Breast epithelium (tissue), 4 donors: ENCODE measurements at regions of chr1 and their contacts with region 1.

Region 1: GRCh38 chr1:247401310-247402119 is 14.5 kb upstream of the NLRP3 start:
- DNase-seq: no peak
- H3K4me3 ChIP-seq: no peak overlapping the region
- H3K27ac ChIP-seq: no peak overlapping the region
- H3K4me1 ChIP-seq: no peaks in the 10 kb centered on the region
- H3K27me3 ChIP-seq: no peaks in the 10 kb centered on the region
- CTCF ChIP-seq: no peak
- POLR2A ChIP-seq: no peak

Region 2: DNA sequence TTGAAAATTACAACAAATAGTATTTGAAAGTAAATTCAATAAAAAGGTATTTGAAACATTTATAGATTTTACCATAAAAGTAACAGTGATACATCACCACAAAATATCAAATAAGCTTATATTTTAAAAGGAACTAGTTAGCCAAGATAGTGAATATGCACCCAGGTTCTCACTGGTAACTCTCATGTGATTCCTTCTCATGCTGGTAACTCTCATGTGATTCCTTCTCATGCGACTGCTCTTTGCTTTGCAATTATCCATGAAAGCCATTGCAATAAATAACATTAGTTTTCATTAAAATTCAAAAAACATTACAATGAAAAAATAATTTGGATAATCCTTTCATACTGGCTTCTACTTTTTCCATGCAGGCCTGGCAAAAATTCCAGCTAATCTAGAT is 545.1 kb before region 1 on chr1:
- intact Hi-C with region 1: no loop called
- DNase-seq: no peak
- H3K4me3 ChIP-seq: no peak overlapping the region
- H3K27ac ChIP-seq: no peak overlapping the region
- H3K4me1 ChIP-seq: no peaks in the 10 kb centered on the region
- H3K27me3 ChIP-seq: no peaks in the 10 kb centered on the region
- CTCF ChIP-seq: no peak
- POLR2A ChIP-seq: no peak

Region 3: DNA sequence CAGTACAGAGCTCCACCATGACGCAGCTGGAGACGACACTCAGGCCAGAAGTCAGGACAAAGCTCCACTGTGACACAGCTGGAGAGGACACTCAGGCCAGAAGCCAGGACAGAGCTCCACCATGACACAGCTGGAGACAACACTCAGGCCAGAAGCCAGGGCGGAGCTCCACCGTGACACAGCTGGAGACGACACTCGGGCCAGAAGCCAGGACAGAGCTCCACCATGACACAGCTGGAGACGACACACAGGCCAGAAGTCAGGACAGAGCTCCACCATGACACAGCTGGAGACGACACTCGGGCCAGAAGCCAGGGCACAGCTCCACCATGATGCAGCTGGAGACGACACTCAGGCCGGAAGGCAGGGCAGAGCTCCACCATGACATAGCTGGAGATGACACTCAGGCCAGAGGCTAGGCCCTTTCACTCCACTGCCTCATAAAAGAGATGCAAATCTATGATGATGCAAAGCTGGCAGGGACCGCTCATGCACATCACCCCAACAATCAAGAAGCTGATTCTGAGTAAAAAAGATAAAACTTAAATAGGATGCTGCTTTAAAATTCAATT is 70.0 kb after region 1 on chr1:
- intact Hi-C with region 1: no loop called
- DNase-seq: no peak
- H3K4me3 ChIP-seq: no peak overlapping the region
- H3K27ac ChIP-seq: no peak overlapping the region
- H3K4me1 ChIP-seq: no peaks in the 10 kb centered on the region
- H3K27me3 ChIP-seq: no peaks in the 10 kb centered on the region
- CTCF ChIP-seq: no peak
- POLR2A ChIP-seq: no peak

Region 4: DNA sequence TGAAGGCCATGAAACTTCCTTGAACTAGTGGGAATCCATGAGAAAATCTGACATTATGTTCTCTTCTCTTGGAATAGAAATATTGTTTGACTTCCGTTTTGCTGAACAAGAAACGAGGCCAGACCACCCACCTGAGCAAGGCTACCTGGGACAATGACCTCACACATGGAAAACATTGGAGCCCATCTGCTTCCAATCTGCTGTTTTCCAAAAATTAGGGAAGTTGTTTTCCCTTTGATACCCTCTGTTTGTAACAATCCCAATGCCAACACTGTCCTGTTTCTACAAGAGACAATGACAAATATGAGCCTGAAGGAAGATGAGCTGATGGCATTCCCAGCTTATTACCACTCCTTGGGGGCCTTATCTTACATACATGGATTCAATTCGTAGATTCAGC is 105.3 kb after region 1 on chr1:
- intact Hi-C with region 1: no loop called
- DNase-seq: no peak
- H3K4me3 ChIP-seq: no peak overlapping the region
- H3K27ac ChIP-seq: no peak overlapping the region
- H3K4me1 ChIP-seq: no peaks in the 10 kb centered on the region
- H3K27me3 ChIP-seq: no peaks in the 10 kb centered on the region
- CTCF ChIP-seq: no peak
- POLR2A ChIP-seq: no peak

Region 5: DNA sequence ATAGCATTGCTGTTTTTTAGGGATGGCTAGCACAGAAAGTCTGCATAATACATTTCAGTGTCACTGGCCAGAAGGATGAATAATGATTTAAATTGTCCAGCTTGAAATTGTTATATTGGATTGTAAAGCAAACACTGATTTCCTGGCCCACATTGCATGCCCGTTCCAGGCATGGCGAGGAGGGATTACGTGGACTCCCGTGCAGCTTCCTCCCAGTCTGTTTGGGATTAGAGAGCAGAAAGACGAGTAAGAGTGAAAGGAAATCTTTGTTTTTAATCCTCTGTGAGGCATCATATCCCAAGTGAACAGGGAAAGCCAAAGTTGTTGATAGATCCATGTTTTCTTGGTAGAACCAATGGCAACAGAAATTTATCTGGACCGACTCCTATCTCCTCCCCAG is 463.9 kb after region 1 on chr1:
- intact Hi-C with region 1: loop called (anchors 5 kb)
- DNase-seq: no peak
- H3K4me3 ChIP-seq: no peak overlapping the region
- H3K27ac ChIP-seq: no peak overlapping the region
- H3K4me1 ChIP-seq: no peaks in the 10 kb centered on the region
- H3K27me3 ChIP-seq: no peaks in the 10 kb centered on the region
- CTCF ChIP-seq: no peak
- POLR2A ChIP-seq: no peak